Activated CD4-positive, alpha-beta T cell treated with anti-CD3 and anti-CD28 coated beads, Interleukin-2, amount 10 ng/mL, durations not matched to agents 24 days and 14 days (primary cell): ENCODE measurements at regions of chrX and their contacts with region 1.

Region 1: DNA sequence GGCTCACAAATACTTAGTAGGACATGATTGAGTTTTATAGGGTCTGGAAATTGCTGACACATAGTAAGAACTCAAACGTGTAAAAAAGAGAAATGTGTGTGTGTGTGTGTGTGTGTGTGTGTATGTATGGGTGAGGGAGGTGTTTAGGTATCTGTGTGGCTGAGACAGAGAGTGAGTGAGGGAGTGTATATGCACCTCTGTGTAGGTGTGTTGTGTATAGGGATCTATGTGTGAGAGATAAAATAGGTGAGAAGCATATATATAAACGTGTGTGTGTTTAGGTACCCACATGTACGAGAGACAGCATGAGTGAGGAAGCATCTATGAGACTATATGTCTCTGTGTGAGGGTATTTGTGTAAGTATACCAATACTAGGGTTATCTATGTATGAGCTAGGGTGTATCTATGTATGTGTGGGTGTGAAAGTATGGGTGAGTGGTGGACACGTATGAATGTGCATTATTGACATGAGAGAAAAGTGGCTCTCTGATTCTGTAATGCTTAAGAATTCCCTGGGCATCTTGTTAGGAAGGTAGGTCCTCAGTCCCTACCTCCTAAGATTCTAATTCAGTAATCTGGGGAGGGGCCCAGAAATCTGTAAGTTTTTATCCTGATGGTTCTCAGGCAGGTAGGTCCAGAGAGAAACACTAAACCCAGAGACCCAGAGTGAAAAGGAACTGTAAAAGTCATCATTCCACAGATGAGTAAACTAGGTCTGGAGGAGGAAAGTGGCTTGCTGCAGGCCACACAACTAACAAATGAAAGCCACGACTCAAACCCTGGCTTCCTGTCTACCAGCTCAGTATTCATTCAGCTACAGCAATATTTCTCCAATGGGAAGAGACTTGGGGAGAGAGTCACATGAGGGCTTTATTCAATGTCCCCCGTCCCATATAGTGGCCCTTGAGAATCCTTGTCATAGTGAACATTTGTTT is 237.0 kb downstream of the IDS start:
- DNase-seq: no peak
- H3K4me3 Mint-ChIP-seq: no peak overlapping the region
- H3K27ac Mint-ChIP-seq: peak overlapping the region; percentile 15
- H3K4me1 Mint-ChIP-seq: peaks cover 6% of the 10 kb centered on the region
- H3K27me3 Mint-ChIP-seq: peaks cover 2% of the 10 kb centered on the region

Region 2: DNA sequence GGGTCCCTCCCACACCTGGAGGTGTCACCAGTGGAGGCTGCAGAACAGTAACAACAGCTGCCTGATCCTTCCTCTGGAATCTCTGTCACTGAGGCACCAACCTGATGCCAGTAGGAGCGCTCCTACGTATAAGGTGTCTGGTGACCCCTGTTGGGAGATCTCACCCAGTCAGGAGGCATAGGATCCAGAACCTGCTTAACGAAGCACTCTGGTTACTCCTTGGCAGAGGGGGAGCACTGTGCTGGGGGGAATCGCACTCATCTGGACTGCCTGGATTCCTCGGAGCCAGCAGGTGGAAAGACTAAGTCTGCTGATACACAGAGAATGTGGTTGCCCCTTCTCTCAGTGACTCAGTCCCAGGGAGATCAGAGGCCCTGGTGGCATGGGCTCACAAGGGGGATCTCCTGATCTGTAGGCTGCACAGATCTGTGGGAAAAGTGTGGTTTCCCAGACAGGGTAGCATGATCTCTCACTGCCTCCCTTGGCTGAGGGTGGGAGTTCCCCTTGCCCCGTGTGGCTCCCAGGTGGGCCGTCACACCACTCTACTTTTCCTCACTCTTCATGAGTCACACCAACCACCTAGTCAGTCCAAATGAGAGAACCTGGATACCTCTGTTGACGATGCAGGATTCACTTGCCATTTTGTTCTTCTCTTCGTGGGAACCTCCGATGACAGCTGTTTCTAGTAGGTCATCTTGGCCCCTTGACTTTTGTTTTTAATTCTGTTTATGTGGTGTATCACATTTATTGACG is 69.0 kb before region 1 on chrX:
- intact Hi-C with region 1: loop called (anchors 1 kb)
- DNase-seq: no peak
- H3K4me3 Mint-ChIP-seq: no peak overlapping the region
- H3K27ac Mint-ChIP-seq: peak overlapping the region; percentile 58
- H3K4me1 Mint-ChIP-seq: peaks cover 3% of the 10 kb centered on the region
- H3K27me3 Mint-ChIP-seq: no peaks in the 10 kb centered on the region

Region 3: DNA sequence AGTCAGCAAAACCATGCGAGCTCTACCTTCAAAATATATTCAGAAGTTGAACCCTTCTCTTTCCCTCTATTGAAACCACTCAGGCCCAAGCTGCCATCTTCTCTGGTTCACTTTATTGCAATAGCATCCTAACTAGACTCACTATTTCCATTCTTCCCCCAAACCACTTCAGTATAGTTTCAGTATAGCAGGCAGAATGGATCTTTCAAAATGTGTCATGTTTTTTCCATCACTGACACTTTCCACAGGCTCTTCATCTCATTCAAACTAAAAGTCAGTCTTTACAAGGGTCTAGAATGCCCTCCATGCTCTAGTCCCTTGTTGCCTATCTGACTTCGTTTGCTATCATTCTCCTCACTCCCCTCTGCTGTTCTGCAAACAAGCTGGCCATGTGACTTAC is 37.5 kb before region 1 on chrX:
- intact Hi-C with region 1: loop called (anchors 5 kb)
- DNase-seq: no peak
- H3K4me3 Mint-ChIP-seq: no peak overlapping the region
- H3K27ac Mint-ChIP-seq: peak overlapping the region; percentile 84
- H3K4me1 Mint-ChIP-seq: peaks cover 3% of the 10 kb centered on the region
- H3K27me3 Mint-ChIP-seq: no peaks in the 10 kb centered on the region

Region 4: GRCh38 chrX:149312988-149313387 is 44.8 kb after region 1 on chrX:
- intact Hi-C with region 1: no loop called
- DNase-seq: no peak
- H3K4me3 Mint-ChIP-seq: no peak overlapping the region
- H3K27ac Mint-ChIP-seq: no peak overlapping the region
- H3K4me1 Mint-ChIP-seq: no peaks in the 10 kb centered on the region
- H3K27me3 Mint-ChIP-seq: no peaks in the 10 kb centered on the region